Activated naive CD4-positive, alpha-beta T cell treated with anti-CD3 and anti-CD28 coated beads for 36 hours (primary cell): ENCODE measurements at regions of chr20 and their contacts with region 1.

Region 1: DNA sequence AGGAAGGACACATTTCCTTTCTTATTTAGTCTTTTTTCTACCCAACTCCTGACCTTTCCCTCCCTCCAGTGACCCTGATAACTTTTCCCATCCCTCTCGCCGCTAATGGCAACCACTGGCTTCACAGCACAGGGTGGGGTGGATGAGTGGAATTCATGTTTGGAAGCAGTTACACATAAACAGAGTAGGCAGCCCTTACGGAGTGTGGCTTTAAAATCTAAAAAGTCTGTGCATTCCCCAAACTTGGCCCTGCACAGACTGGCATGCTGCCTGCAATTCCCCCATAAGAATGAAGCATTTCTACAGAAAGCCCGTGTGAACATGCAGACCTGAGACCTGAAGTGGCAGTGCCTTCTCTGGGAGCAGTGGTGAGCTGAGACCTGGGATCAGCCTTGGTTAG is 275.9 kb upstream of the PRND start:
- DNase-seq: no peak
- H3K4me3 Mint-ChIP-seq: no peak overlapping the region
- H3K27ac Mint-ChIP-seq: no peak overlapping the region
- H3K4me1 Mint-ChIP-seq: no peaks in the 10 kb centered on the region
- H3K27me3 Mint-ChIP-seq: peaks cover 2% of the 10 kb centered on the region

Region 2: GRCh38 chr20:4483486-4483885 is 37.7 kb after region 1 on chr20:
- CTCF ChIA-PET with region 1: no interaction called
- intact Hi-C with region 1: loop called (anchors 2 kb)
- DNase-seq: no peak
- H3K4me3 Mint-ChIP-seq: no peak overlapping the region
- H3K27ac Mint-ChIP-seq: no peak overlapping the region
- H3K4me1 Mint-ChIP-seq: no peaks in the 10 kb centered on the region
- H3K27me3 Mint-ChIP-seq: peaks cover 17% of the 10 kb centered on the region